Pancreas (tissue), 10 donors: ENCODE measurements at regions of chr3 and their contacts with region 1.

Region 1: DNA sequence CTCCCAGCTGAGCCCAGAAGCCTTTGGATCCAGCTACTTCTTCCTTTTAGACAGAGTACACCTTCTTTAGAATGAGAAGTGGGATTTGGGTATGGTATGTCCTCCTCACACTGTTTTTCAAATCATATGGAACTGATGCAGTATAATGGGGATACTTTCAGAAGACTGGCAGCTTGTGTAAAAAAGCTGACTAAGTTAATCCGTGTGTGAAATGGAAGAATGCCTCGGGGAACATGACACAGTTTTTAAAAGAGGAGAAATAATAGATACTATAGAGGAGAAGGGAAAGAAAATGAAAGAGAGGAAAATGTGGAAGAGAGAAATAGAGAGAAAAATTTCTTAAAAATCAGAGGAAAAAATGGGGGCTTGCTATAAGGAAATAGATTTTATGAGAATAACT is 47.7 kb downstream of the TUSC7 start:
- DNase-seq: no peak
- ATAC-seq: no peak
- H3K4me3 ChIP-seq: no peak overlapping the region
- H3K27ac ChIP-seq: no peak overlapping the region
- H3K4me1 ChIP-seq: no peaks in the 10 kb centered on the region
- H3K27me3 ChIP-seq: peaks cover 0 to 4% (median 0%) of the 10 kb centered on the region in 4 donors
- CTCF ChIP-seq: no peak

Region 2: GRCh38 chr3:116140100-116140689 is 617.1 kb before region 1 on chr3:
- intact Hi-C with region 1: loop called in 1 of 3 experiments (anchors 10 kb)
- DNase-seq: no peak
- ATAC-seq: peak in 1 of 4 donors; percentile 29
- H3K4me3 ChIP-seq: no peak overlapping the region
- H3K27ac ChIP-seq: no peak overlapping the region
- H3K4me1 ChIP-seq: no peaks in the 10 kb centered on the region
- H3K27me3 ChIP-seq: no peaks in the 10 kb centered on the region
- CTCF ChIP-seq: peak; percentile 27 to 72 (median 46)